ENCODE measurements at regions of chr7 and their contacts with region 1.

Region 1: DNA sequence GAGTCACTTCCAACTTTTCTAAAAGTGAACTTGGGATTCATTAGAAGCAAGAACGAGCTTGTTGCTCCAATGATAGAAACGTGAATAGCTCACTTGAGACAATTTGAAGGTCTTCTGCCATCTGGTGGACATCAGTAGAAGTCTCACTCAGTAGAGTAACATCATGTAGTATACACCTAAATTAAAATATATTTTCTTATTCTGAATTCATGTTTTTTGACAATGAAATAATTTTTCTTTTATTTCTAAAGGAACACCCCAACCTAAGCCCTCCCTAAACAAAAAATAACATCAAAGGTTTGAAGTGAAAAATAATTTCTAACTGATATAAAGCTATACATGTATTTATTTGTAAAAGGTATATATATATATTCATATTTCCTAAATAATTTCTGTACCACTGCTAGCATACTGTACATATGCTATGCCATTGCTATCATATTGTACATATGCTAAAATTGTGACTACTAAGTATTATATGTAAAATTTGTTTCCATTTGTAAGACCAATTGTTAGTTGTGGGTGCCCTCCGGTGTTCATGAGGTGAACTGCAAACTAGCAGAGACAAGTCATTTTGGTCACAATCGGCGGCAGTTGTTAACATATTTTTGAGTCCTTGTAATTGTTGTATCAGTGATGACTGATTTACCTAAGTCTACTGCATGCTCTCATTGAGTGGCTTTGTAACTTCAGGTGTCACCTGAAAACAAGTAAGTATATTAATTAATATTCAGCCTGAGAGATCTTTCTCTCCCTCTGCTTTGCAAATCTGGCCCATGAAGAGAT is 121.9 kb downstream of the PTPRZ1 start:
- DNase-seq: peak; percentile 69
- H3K4me3 ChIP-seq: no peak overlapping the region
- H3K27ac ChIP-seq: no peak overlapping the region
- H3K4me1 ChIP-seq: peaks cover 2% of the 10 kb centered on the region
- H3K27me3 ChIP-seq: peaks cover 3 to 5% of the 10 kb centered on the region in 2 experiments
- CTCF ChIP-seq: peak; percentile 45 to 59
- POLR2A ChIP-seq: no peak

Region 2: GRCh38 chr7:121138262-121138933 is 856.4 kb before region 1 on chr7:
- CTCF ChIA-PET with region 1: interaction called, 20 read pairs
- POLR2A ChIA-PET with region 1: no interaction called
- dilution Hi-C with region 1: no loop called
- intact Hi-C with region 1: no loop called
- DNase-seq: no peak
- H3K4me3 ChIP-seq: no peak overlapping the region
- H3K27ac ChIP-seq: no peak overlapping the region
- H3K4me1 ChIP-seq: no peaks in the 10 kb centered on the region
- H3K27me3 ChIP-seq: peaks cover 0 to 9% of the 10 kb centered on the region in 2 experiments
- CTCF ChIP-seq: no peak
- POLR2A ChIP-seq: no peak

Region 3: GRCh38 chr7:121302214-121302745 is 692.5 kb before region 1 on chr7:
- CTCF ChIA-PET with region 1: no interaction called
- POLR2A ChIA-PET with region 1: no interaction called
- dilution Hi-C with region 1: no loop called
- intact Hi-C with region 1: no loop called
- DNase-seq: no peak
- H3K4me3 ChIP-seq: no peak overlapping the region
- H3K27ac ChIP-seq: no peak overlapping the region
- H3K4me1 ChIP-seq: no peaks in the 10 kb centered on the region
- H3K27me3 ChIP-seq: peaks cover 2 to 3% of the 10 kb centered on the region in 2 experiments
- CTCF ChIP-seq: no peak
- POLR2A ChIP-seq: no peak

Region 4: GRCh38 chr7:121372376-121373010 is 622.3 kb before region 1 on chr7:
- CTCF ChIA-PET with region 1: interaction called, 114 read pairs
- POLR2A ChIA-PET with region 1: no interaction called
- dilution Hi-C with region 1: no loop called
- intact Hi-C with region 1: loop called (anchors 1 kb)
- DNase-seq: peak; percentile 67
- H3K4me3 ChIP-seq: no peak overlapping the region
- H3K27ac ChIP-seq: peak overlapping the region; percentile 37
- H3K4me1 ChIP-seq: peaks cover 16% of the 10 kb centered on the region
- H3K27me3 ChIP-seq: no peaks in the 10 kb centered on the region
- CTCF ChIP-seq: no peak
- POLR2A ChIP-seq: no peak

Region 5: DNA sequence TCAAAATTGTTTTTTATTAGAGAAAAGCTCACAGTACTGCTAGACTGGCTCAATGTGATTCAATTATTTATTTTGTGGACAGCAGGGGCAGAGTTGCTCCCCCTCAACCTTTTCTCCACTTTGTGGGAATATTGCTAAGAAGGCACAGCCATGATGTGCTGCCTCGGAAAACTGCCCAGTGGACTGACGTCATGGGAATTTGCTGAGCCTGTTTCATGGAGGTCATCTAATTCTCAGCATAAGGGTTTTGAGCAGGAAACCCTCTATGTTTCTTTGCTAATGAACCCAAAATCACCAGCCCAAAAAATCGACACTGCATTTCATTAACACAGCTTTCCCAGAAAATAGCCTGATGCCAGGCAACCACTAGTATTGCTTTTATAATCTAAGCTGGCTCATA is 369.9 kb before region 1 on chr7:
- CTCF ChIA-PET with region 1: interaction called, 13 read pairs
- POLR2A ChIA-PET with region 1: no interaction called
- dilution Hi-C with region 1: no loop called
- intact Hi-C with region 1: no loop called
- DNase-seq: no peak
- H3K4me3 ChIP-seq: no peak overlapping the region
- H3K27ac ChIP-seq: no peak overlapping the region
- H3K4me1 ChIP-seq: no peaks in the 10 kb centered on the region
- H3K27me3 ChIP-seq: no peaks in the 10 kb centered on the region
- CTCF ChIP-seq: no peak
- POLR2A ChIP-seq: no peak

Region 6: DNA sequence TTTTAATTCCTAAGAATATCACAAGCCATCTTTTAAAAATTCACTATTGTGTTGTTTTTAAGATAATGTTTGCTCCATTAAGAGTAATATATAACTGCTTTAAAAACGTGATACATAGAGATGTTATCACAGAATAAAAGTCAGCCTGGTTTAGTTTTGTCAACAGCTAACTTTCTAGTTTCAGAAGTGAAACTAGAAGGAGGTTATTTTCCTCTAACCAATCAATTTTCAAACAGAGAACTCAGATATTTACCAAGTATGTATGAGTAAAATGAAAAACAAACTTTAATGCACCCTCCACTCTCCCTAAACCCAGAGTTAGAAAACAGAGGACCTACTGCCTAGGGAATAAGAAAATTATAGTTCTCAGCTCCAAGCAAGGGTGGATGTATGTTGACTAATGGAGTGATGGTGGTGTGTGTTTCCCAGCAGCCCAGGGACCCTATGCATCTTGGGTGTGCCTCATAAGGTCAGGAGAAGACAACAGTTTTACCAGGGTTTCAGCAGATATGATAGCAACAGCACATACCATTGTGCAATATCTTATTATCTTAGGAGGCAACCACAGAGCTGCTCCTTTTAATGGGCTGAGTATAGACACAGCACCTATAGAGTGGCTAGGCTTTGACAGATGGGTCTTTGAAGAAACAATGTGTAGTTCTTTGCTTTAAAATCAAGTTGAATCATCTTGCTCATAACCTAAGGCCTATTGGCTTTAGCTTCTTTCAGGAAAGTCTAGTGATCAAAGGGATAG is 63.5 kb before region 1 on chr7:
- CTCF ChIA-PET with region 1: interaction called, 10 read pairs
- POLR2A ChIA-PET with region 1: no interaction called
- dilution Hi-C with region 1: no loop called
- intact Hi-C with region 1: no loop called
- DNase-seq: no peak
- H3K4me3 ChIP-seq: no peak overlapping the region
- H3K27ac ChIP-seq: no peak overlapping the region
- H3K4me1 ChIP-seq: no peaks in the 10 kb centered on the region
- H3K27me3 ChIP-seq: no peaks in the 10 kb centered on the region
- CTCF ChIP-seq: no peak
- POLR2A ChIP-seq: no peak

Region 7: DNA sequence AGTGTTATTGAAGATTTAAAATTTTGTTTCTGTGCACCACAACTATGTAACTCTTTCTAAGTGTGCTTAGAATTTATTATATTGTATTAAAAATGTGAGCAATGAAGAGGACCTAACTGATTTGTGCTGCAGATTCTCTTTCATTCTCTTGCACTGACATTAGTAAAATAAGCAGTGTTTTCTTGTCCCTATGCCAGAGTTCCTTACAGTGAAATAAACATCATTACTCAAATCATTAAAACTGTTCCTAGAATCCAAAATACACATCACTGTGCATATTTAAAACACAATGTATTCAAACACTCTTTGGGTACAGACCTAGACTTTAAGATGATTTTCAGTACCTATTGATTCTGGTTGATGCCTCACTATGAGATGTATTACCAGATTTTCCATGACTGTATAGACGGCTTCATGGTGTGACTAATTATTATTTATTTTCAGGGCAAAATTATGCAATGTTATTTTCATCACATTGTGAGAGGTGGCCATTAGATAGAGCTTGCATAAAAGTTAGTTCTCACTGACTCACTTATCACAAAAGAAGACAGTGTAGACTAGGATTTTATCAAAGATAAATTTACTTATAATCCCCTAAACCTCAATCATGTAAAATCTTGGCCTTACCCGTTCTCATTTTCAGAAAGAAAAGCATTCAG is 28.4 kb before region 1 on chr7:
- CTCF ChIA-PET with region 1: interaction called, 12 read pairs
- POLR2A ChIA-PET with region 1: no interaction called
- dilution Hi-C with region 1: no loop called
- intact Hi-C with region 1: no loop called
- DNase-seq: no peak
- H3K4me3 ChIP-seq: no peak overlapping the region
- H3K27ac ChIP-seq: no peak overlapping the region
- H3K4me1 ChIP-seq: no peaks in the 10 kb centered on the region
- H3K27me3 ChIP-seq: peaks cover 0 to 2% of the 10 kb centered on the region in 2 experiments
- CTCF ChIP-seq: no peak
- POLR2A ChIP-seq: no peak

Region 8: GRCh38 chr7:122073635-122074034 is 78.8 kb after region 1 on chr7:
- CTCF ChIA-PET with region 1: no interaction called
- POLR2A ChIA-PET with region 1: no interaction called
- dilution Hi-C with region 1: no loop called
- intact Hi-C with region 1: no loop called
- DNase-seq: no peak
- H3K4me3 ChIP-seq: no peak overlapping the region
- H3K27ac ChIP-seq: no peak overlapping the region
- H3K4me1 ChIP-seq: no peaks in the 10 kb centered on the region
- H3K27me3 ChIP-seq: no peaks in the 10 kb centered on the region
- CTCF ChIP-seq: no peak
- POLR2A ChIP-seq: no peak